ENCODE measurements at regions of chr10 and their contacts with region 1.

Region 1: GRCh38 chr10:52128056-52128683 is 185.9 kb upstream of the DKK1 start:
- DNase-seq: peak; percentile 78 to 88
- ATAC-seq: peak; percentile 97 to 98
- H3K4me3 ChIP-seq: peak overlapping the region; percentile 49 to 51 (median 49)
- H3K27ac ChIP-seq: peak overlapping the region; percentile 81 to 82 (median 82)
- H3K4me1 ChIP-seq: peaks cover 5 to 7% of the 10 kb centered on the region in 2 donors
- H3K27me3 ChIP-seq: no peaks in the 10 kb centered on the region
- CTCF ChIP-seq: no peak
- POLR2A ChIP-seq: peak; percentile 58 to 78

Region 2: DNA sequence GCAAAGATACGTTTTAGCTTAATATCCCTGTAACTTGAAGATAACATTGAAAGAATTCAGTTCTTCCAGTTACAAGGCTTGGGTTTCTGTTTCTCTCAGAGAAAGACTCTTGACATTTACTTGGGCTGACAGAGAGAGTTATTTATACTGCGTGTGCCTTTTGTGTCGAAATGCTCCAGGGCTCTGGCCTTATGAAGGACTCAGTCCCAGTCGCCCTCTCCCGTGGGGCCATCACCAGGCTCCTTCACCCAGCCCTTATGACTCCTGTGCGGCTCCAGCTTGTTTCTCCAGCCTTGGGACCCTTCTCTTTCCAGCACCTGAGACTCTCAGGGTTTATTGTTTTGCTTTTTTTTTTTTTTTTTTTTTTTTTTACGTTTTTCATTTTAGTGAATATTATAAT is 56.4 kb before region 1 on chr10:
- in situ Hi-C with region 1: no loop called
- intact Hi-C with region 1: loop called (anchors 2 kb)
- DNase-seq: peak; percentile 34 to 71
- ATAC-seq: peak; percentile 99 to 100
- H3K4me3 ChIP-seq: peak overlapping the region in 1 of 4 donors; percentile 12
- H3K27ac ChIP-seq: peak overlapping the region; percentile 50 to 72 (median 58)
- H3K4me1 ChIP-seq: peaks cover 16 to 24% of the 10 kb centered on the region in 2 donors
- H3K27me3 ChIP-seq: no peaks in the 10 kb centered on the region
- CTCF ChIP-seq: no peak
- POLR2A ChIP-seq: no peak

Region 3: DNA sequence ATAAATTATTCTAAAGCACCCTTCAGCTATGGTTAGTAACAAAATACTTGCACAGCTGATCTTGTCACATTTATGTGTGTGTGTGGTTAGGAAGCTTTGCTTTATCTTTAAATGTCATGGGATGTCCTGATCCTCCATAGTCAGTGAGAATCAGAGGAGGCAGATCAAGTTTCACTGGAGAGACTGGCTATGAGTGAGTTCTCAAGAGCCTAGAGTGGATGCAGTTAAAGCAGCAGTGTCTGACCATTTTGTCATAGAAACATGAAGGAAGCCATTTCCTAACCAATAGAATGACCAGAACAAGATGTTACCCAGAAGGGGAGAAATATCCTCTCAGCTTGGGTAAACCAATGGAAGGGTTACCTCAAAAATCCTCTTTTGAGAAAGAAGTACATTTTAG is 21.3 kb before region 1 on chr10:
- in situ Hi-C with region 1: no loop called
- intact Hi-C with region 1: loop called (anchors 1 kb)
- DNase-seq: peak in 1 of 2 donors; percentile 17
- ATAC-seq: peak; percentile 42 to 43
- H3K4me3 ChIP-seq: no peak overlapping the region
- H3K27ac ChIP-seq: peak overlapping the region; percentile 76 to 87 (median 78)
- H3K4me1 ChIP-seq: peaks cover 35 to 44% of the 10 kb centered on the region in 2 donors
- H3K27me3 ChIP-seq: no peaks in the 10 kb centered on the region
- CTCF ChIP-seq: no peak
- POLR2A ChIP-seq: no peak

Measured in gastrocnemius medialis (tissue), 4 donors.